ENCODE measurements at regions of chr11 and their contacts with region 1.

Region 1: GRCh38 chr11:118051611-118052461 is 25.0 kb upstream of the TMPRSS4 start:
- DNase-seq: peak; percentile 77
- ATAC-seq: peak; percentile 82
- H3K4me3 Mint-ChIP-seq: peak overlapping the region; percentile 46
- H3K27ac Mint-ChIP-seq: peak overlapping the region; percentile 89
- H3K4me1 Mint-ChIP-seq: peaks cover 60% of the 10 kb centered on the region
- H3K27me3 Mint-ChIP-seq: peaks cover under 1% of the 10 kb centered on the region

Region 2: DNA sequence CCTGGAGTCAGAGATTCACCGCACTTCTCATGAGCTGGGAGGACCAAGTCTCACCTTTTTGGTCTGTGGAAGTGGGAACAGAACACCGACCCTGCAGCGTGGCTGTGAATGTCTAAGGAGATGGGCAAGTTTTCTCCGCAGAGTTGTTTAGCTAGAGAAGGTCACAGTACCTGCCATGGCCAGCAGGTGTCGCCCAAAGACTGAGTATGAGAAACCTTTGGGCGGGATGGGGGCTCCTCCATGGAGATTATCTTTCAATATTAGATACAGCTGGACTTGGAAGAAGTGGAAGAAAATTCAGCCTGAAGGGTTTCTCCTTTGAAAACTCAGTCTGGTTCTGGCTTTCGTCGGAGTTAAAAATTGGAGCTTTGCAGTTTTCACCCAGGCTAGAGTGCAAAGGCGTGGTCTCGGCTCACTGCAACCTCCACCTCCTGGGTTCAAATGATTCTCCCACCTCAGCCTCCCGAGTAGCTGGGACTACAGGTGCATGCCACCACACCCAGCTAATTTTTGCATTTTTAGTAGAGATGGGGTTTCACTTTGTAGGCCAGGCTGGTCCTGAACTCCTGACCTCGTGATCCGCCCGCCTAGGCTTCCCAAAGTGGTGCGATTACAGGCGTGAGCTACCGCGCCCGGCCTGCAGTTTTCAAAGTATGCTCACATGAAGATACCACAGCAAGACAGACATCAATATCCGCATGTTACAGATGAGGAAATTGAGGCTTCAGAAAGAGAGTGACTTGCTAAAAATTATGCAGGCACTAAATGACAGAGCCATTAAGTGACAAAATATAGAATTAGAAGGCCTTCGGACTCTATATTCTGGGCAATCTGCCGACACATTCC is 244.1 kb before region 1 on chr11:
- CTCF ChIA-PET with region 1: interaction called, 72 read pairs
- POLR2A ChIA-PET with region 1: no interaction called
- intact Hi-C with region 1: loop called (anchors 1 kb)
- DNase-seq: peak; percentile 87
- ATAC-seq: peak; percentile 56
- H3K4me3 Mint-ChIP-seq: no peak overlapping the region
- H3K27ac Mint-ChIP-seq: no peak overlapping the region
- H3K4me1 Mint-ChIP-seq: peaks cover 15% of the 10 kb centered on the region
- H3K27me3 Mint-ChIP-seq: peaks cover 3% of the 10 kb centered on the region

Region 3: DNA sequence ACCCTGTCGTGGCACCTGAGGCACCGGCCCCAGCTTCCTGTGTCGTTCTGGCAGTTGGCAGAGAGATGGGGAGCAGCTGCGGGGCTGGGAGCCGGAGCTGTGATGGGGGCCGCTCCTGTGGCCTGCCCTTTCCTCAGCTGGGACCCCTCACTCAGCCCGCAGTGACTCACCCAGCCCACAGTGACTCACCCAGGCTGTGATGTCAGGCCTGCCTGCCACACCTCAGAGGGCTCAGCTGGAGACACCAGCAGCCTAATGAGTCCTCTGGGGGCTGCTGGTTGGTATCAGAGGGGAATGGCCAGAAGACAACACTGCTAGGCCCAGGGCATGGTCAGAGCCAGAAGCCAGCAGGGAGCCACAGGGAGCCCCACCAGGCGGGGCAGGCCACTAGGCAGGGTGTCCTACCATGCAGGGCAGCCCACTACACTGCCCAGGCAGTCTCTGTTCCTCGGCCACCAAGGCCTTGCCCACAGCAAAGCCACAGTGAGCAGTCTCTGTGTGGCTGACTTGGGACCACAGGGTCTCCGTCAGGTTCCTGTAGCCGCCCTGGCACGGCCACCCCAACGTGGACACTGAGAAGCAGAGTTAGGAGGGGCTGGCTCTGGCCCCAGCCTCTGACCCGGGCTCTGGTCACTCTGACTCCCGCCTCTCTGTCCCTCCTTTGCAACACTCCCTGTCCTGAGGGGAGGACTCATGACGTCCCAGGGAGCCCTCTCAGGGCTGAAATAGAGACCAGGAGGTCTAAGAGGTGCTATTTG is 223.0 kb before region 1 on chr11:
- CTCF ChIA-PET with region 1: interaction called, 48 read pairs
- POLR2A ChIA-PET with region 1: interaction called, 3 read pairs
- intact Hi-C with region 1: loop called in 1 of 2 experiments (anchors 1 kb)
- DNase-seq: peak; percentile 91
- ATAC-seq: peak; percentile 96
- H3K4me3 Mint-ChIP-seq: no peak overlapping the region
- H3K27ac Mint-ChIP-seq: peak overlapping the region; percentile 78
- H3K4me1 Mint-ChIP-seq: peaks cover 41% of the 10 kb centered on the region
- H3K27me3 Mint-ChIP-seq: no peaks in the 10 kb centered on the region

Region 4: DNA sequence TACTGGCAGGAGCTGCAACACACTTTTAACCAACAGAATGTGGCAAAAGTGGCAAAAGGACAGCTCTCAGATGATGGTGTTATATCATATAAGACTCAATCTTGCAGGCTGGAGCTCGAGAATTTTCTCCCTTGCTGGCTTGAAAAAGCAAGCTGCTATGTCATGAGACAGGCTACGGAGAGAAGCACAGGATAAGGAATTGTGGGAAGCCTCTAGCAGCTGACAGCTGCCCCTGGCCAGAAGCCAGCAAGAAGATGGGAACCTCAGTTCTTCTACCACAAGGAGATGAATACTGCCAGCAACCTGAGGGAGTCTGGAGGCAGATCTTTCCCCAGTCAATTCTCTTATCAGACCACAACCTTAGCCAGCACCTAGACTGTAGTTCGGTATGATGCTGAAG is 200.0 kb before region 1 on chr11:
- CTCF ChIA-PET with region 1: interaction called, 94 read pairs
- POLR2A ChIA-PET with region 1: no interaction called
- intact Hi-C with region 1: no loop called
- DNase-seq: no peak
- ATAC-seq: no peak
- H3K4me3 Mint-ChIP-seq: no peak overlapping the region
- H3K27ac Mint-ChIP-seq: no peak overlapping the region
- H3K4me1 Mint-ChIP-seq: peaks cover 7% of the 10 kb centered on the region
- H3K27me3 Mint-ChIP-seq: peaks cover 11% of the 10 kb centered on the region

Region 5: DNA sequence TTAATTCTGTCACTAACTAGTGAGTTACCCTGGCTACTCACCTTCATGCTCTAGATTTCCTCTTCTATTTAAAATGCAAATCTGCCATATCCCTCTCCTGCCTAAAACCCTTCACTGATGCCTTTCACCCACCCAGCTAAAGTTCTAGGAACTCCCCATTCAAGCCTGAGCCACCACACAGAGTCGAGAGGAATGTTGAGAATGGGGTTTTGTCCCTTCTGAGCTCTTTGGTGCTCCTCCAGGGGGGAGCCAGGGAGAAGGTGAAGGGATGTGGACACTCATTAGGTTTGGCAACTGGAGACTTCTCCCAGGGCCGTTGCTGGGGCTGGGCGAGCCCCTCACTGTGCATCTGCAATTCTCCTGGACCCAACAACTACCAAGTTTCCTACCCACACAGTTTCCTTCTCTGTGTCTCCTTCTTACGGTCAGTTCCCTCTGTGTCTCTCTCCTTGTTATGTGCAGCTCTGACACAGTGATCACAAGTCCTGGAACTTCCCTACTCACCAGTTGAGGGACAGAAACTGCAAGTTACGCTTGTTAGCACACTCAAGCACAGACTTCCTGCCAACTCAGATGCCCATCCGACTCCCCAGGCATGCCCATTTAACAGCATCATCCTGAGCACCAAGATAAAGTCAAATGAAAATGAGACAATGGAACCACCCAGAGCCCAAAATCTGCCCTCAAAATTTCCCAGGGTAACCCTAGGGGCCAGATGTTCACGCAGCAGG is 72.2 kb before region 1 on chr11:
- CTCF ChIA-PET with region 1: interaction called, 43 read pairs
- POLR2A ChIA-PET with region 1: interaction called, 4 read pairs
- intact Hi-C with region 1: no loop called
- DNase-seq: peak; percentile 55
- ATAC-seq: peak; percentile 69
- H3K4me3 Mint-ChIP-seq: no peak overlapping the region
- H3K27ac Mint-ChIP-seq: peak overlapping the region; percentile 90
- H3K4me1 Mint-ChIP-seq: peaks cover 79% of the 10 kb centered on the region
- H3K27me3 Mint-ChIP-seq: no peaks in the 10 kb centered on the region

Region 6: DNA sequence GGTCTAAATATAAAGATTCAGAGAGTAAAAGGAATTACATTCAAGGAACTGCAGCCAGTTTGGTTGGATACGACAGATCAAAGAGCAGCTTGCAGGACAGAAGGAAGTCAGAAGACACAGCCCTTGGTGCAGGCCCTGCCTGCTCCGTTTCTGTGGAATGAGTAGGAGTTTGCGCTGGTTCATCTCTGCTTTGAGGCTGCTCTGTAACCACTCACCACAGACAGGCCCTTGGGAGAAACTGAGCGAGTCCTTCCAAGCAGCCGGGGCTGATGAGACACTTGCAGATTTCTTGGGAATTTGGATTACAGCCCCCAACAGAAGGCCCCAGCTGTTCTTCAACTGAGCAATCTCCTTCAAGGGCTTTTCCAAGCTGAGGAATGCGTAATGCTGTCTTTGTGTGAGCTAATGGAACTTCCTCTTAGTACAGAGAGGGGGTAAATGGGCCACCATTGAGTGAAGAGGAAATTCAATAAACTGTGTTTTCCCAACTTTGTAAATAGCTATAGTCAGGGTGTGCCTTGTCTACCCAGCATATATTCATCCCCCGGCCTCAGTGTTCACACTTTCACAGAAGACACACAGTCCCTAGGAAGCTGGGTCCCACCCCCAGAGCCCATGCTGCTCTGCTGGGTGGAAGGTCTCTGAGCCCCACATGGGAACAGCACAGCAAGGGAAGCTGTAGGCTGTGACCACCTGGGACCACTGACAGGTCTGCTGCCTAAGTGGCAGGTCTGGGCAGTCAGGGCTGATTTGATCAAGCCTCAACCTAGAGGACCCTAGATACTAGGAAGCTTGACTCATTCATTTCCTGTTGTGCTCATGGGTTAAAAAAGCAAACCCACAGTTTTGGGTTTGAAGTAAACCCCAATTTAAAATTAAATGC is 49.1 kb before region 1 on chr11:
- CTCF ChIA-PET with region 1: interaction called, 69 read pairs
- POLR2A ChIA-PET with region 1: interaction called, 32 read pairs
- intact Hi-C with region 1: loop called in 1 of 2 experiments (anchors 1 kb)
- DNase-seq: peak; percentile 85
- ATAC-seq: peak; percentile 67
- H3K4me3 Mint-ChIP-seq: peak overlapping the region; percentile 38
- H3K27ac Mint-ChIP-seq: peak overlapping the region; percentile 97
- H3K4me1 Mint-ChIP-seq: peaks cover 94% of the 10 kb centered on the region
- H3K27me3 Mint-ChIP-seq: no peaks in the 10 kb centered on the region

Measured in activated CD4-positive, alpha-beta T cell treated with anti-CD3 and anti-CD28 coated beads for 36 hours (primary cell).